ENCODE measurements at regions of chr18 and their contacts with region 1.

Region 1: GRCh38 chr18:43422518-43422917 is 145.2 kb upstream of the SYT4 start:
- DNase-seq: no peak
- H3K4me3 ChIP-seq: no peak overlapping the region
- H3K27ac ChIP-seq: no peak overlapping the region
- H3K4me1 ChIP-seq: no peaks in the 10 kb centered on the region
- H3K27me3 ChIP-seq: no peaks in the 10 kb centered on the region
- CTCF ChIP-seq: no peak

Region 2: GRCh38 chr18:43350176-43350575 is 72.3 kb before region 1 on chr18:
- intact Hi-C with region 1: loop called (anchors 2 kb)
- DNase-seq: no peak
- H3K4me3 ChIP-seq: no peak overlapping the region
- H3K27ac ChIP-seq: no peak overlapping the region
- H3K4me1 ChIP-seq: no peaks in the 10 kb centered on the region
- H3K27me3 ChIP-seq: no peaks in the 10 kb centered on the region
- CTCF ChIP-seq: no peak

Region 3: DNA sequence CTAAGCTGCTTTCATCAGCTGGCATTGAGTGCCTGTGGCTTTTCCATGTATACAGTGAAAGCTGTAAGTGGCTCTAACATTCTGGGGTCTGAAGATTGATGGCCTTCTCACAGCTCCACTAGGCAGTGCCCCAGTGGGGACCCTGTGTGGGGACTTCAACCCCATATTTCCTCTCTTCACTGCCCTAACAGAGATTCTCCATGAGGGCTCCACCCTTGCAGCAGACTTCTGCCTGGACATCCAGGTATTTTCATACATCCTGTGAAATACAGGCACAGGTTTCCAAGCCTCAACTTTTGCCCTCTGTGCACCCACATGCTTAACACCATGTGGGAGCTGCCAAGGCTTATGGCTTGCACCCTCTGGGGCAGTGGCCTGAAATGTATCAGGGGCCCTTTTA is 43.0 kb after region 1 on chr18:
- intact Hi-C with region 1: no loop called
- DNase-seq: no peak
- H3K4me3 ChIP-seq: no peak overlapping the region
- H3K27ac ChIP-seq: no peak overlapping the region
- H3K4me1 ChIP-seq: no peaks in the 10 kb centered on the region
- H3K27me3 ChIP-seq: no peaks in the 10 kb centered on the region
- CTCF ChIP-seq: no peak

Region 4: DNA sequence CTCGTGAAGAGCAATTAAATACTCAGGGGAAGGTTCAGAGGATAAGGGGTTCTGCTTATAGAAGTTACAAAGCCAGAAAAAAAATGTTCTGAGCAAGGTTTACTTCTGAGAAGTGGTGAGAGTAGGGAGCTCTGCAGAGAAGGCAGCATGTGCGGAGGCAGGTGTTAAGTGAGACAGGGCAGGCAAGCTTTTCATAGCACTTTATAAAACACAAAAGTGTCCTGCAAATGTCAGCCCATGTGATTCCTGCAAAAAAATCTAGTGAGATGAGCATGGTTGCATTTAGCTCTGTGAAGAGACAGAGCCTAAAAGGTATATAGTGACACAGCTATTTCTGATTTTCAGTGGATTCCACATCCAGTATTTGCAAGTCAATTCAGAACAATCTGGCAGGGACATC is 78.6 kb after region 1 on chr18:
- intact Hi-C with region 1: no loop called
- DNase-seq: no peak
- H3K4me3 ChIP-seq: no peak overlapping the region
- H3K27ac ChIP-seq: no peak overlapping the region
- H3K4me1 ChIP-seq: no peaks in the 10 kb centered on the region
- H3K27me3 ChIP-seq: no peaks in the 10 kb centered on the region
- CTCF ChIP-seq: no peak

Measured in ascending aorta (tissue), 2 donors.